Mammary epithelial cell (primary cell): ENCODE measurements at regions of chr18 and their contacts with region 1.

Region 1: DNA sequence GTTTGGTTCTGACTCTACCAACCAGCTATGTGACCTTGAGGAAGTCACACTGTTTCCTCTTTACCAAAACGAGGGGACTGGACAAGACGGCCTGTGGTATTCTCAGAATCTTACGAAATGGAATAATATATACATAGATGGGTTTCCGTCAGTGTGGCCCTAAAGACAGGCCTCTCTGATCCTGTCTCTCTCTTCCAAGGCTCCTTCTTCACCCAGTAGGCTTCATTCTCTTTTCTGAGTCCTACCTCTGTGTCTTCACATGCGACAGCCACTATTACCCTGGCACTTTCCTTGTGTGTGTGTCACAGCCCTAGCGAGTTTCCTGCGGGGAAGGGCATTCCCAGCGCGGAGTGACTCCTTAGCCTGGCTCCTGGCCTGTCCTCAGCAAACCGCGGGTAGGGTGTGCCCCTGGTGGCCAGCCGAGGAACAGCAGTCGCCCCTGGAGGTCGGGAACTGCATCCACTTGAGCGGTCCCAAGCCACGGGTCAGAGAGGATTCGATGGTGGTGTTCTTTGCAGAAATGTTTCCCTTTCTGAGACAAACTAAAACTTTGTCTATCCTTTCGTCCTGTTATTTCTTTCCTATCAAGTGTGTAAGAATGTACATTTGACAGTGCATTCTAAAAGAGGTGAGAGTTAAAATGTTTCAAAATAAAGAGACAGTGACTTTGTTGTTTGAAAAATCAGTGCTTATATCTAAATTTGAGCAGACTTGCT is 63.3 kb downstream of the RAB31 start:
- DNase-seq: peak; percentile 37
- H3K4me3 ChIP-seq: no peak overlapping the region
- H3K27ac ChIP-seq: no peak overlapping the region
- H3K4me1 ChIP-seq: no peaks in the 10 kb centered on the region
- H3K27me3 ChIP-seq: no peaks in the 10 kb centered on the region
- CTCF ChIP-seq: peak; percentile 87 to 89

Region 2: GRCh38 chr18:9482790-9483189 is 288.6 kb before region 1 on chr18:
- CTCF ChIA-PET with region 1: interaction called, 10 read pairs
- dilution Hi-C with region 1: no loop called
- in situ Hi-C with region 1: no loop called
- intact Hi-C with region 1: no loop called
- DNase-seq: no peak
- H3K4me3 ChIP-seq: no peak overlapping the region
- H3K27ac ChIP-seq: no peak overlapping the region
- H3K4me1 ChIP-seq: no peaks in the 10 kb centered on the region
- H3K27me3 ChIP-seq: no peaks in the 10 kb centered on the region
- CTCF ChIP-seq: no peak

Region 3: DNA sequence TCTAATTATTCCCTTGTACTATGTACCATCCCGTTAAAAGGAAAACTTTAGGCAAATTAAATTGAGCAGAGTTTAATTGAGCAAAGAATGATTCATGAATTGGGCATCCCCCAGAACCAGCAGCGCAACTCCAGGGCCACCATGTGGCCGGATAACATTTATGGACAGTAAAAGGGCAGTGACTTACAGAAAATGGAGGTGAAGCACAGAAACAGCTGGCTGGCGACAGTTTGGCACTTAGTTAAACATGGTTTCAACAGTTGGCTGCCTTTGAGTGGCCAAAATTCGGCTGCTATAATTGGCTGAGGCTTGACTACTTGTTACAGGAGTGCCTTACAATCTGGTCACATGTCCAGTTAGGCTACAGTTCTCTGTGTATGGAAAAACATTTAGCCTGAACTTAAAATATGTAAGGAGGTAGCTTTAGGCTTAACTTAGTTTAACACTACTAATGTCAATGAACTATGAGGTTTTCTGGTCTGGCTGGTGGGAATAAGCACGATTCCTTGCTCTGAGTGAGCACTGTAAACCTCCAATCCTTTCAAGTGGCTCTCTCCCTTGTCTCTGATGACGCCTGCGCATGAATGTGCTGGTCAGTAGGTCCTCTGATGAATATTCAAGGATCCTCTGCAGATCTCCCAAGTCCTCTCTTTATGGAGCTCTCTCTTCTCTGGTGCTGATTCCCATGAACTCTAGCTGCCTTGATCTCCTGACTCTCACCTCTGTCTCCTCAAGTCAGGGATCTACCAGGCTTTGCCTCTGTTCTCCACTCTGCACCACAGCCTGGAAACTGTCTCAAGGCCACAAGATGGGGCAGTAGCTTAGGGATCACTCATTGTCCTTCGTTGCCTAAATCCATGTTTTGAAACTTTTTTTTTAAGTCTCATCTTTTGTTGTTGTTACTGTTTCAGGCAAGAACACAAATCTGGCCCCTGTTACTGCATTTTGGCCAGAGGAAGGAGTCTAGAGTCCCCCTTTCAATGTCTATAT is 87.7 kb before region 1 on chr18:
- CTCF ChIA-PET with region 1: no interaction called
- dilution Hi-C with region 1: no loop called
- in situ Hi-C with region 1: no loop called
- intact Hi-C with region 1: loop called (anchors 10 kb)
- DNase-seq: peak; percentile 50
- H3K4me3 ChIP-seq: no peak overlapping the region
- H3K27ac ChIP-seq: no peak overlapping the region
- H3K4me1 ChIP-seq: peaks cover 6% of the 10 kb centered on the region
- H3K27me3 ChIP-seq: no peaks in the 10 kb centered on the region
- CTCF ChIP-seq: peak; percentile 36 to 59

Region 4: DNA sequence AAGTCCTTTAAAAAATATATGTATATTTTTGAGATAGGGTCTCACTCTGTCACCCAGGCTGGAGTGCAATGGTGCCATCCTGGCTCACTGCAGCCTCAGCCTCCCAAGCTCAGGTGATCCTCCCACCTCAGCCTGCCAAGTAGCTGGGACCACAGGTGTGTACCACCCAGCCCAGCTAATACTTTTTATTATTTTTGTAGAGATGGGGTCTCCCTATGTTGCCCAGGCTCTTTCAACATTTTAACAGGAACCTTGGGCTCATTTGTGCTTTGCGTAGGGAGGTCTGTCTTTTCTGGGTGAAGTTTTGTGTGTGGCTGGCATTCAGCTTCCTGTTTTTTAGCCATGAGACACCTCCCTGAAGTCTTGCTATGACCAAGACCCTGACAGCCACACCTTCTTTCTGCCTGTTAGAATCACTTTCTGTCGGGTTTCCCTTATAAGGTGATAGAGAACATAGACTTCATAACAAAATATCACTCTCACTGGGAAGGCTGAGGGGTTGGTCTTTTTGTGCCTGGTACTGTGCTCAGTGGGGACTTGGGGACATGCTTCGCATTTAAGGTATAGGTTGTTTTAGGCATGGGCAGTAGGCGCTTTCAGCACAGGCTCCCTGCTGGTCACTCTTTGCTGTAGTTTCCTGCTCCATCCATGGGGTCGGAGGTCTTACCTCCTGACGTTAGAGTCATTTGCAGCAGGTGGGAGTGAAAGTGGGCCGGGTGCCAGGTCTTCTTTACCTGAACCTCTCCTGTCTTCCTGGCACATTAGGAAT is 59.9 kb before region 1 on chr18:
- CTCF ChIA-PET with region 1: no interaction called
- dilution Hi-C with region 1: loop called (anchors 5 kb)
- in situ Hi-C with region 1: no loop called
- intact Hi-C with region 1: no loop called
- DNase-seq: no peak
- H3K4me3 ChIP-seq: no peak overlapping the region
- H3K27ac ChIP-seq: no peak overlapping the region
- H3K4me1 ChIP-seq: peaks cover 15% of the 10 kb centered on the region
- H3K27me3 ChIP-seq: no peaks in the 10 kb centered on the region
- CTCF ChIP-seq: no peak

Region 5: DNA sequence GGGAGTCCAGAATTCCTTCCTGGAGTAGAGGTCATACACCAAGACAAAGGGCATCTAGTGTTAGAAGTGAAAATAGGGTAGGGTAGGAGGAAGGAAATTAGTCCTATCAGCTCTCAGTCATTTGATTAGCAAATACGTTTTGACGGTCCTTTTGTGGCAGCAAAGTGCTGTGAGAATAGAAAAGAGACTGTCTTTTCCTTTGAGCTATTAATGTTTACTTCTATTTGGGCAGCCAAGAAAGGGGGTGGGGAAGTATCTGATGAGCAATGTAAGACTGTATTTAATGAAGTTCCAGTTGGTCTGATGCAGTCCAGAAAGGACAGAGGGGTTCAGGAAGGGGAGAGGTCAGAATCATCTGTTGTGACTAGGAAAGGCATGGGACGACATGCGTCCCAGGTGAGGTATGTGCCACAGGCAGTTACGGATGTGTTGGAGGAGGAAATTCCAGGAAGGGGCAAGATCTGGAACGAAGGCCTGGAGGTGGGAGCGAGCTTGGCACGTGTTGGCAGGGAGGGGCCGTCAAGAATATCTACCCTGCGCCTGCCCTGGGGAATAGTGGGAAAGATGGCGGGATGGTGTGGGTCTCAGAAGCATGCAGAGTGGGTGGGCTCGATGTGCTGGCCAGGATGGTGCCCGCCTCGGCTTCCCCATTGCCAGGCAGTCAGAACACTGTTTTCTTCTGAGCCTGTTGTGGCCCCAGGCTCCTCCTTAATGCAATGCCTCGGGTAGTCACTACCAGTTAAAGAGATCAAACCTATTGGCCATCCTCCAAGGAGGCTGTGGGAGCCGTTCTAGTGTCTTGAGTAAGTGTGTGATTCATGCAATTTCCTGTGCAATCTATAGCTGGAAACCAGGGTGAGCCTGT is 56.5 kb after region 1 on chr18:
- CTCF ChIA-PET with region 1: no interaction called
- dilution Hi-C with region 1: no loop called
- in situ Hi-C with region 1: no loop called
- intact Hi-C with region 1: loop called (anchors 5 kb)
- DNase-seq: peak; percentile 98
- H3K4me3 ChIP-seq: peak overlapping the region in 2 of 3 experiments; percentile 40 to 41
- H3K27ac ChIP-seq: peak overlapping the region; percentile 77
- H3K4me1 ChIP-seq: peaks cover 54% of the 10 kb centered on the region
- H3K27me3 ChIP-seq: no peaks in the 10 kb centered on the region
- CTCF ChIP-seq: no peak

Region 6: GRCh38 chr18:9849407-9850281 is 78.2 kb after region 1 on chr18:
- CTCF ChIA-PET with region 1: no interaction called
- dilution Hi-C with region 1: loop called (anchors 5 kb)
- in situ Hi-C with region 1: no loop called
- intact Hi-C with region 1: no loop called
- DNase-seq: no peak
- H3K4me3 ChIP-seq: no peak overlapping the region
- H3K27ac ChIP-seq: no peak overlapping the region
- H3K4me1 ChIP-seq: no peaks in the 10 kb centered on the region
- H3K27me3 ChIP-seq: no peaks in the 10 kb centered on the region
- CTCF ChIP-seq: no peak